ENCODE measurements at regions of chr1 and their contacts with region 1.

Region 1: DNA sequence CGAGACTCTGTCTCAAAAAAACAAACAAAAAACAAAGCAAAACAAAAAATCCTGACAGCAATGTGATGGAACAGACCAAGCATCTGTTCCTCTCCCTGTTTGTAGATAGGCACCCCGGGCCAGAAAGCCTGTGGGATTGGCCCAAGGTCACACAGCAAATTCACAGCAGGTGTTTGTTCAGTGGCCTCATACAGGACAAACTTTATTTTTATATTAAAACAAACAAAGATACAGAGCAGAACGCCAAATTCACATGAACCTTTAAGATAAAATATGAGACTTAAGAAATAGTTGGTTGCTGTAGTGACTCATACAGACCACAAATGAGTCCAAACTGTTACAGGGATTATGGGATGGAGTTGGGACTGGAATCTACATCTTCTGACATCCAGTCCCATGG is 2.3 kb upstream of the CELA2A start:
- DNase-seq: no peak
- H3K4me3 ChIP-seq: no peak overlapping the region
- H3K4me3 Mint-ChIP-seq: no peak overlapping the region
- H3K27ac ChIP-seq: no peak overlapping the region
- H3K27ac Mint-ChIP-seq: no peak overlapping the region
- H3K4me1 ChIP-seq: no peaks in the 10 kb centered on the region
- H3K4me1 Mint-ChIP-seq: peaks cover 9% of the 10 kb centered on the region
- H3K27me3 ChIP-seq: no peaks in the 10 kb centered on the region
- H3K27me3 Mint-ChIP-seq: peaks cover 2 to 4% (median 3%) of the 10 kb centered on the region in 3 donors
- CTCF ChIP-seq: no peak

Region 2: GRCh38 chr1:15352123-15352957 is 101.9 kb before region 1 on chr1:
- intact Hi-C with region 1: no loop called
- DNase-seq: peak; percentile 46 to 78 (median 62)
- H3K4me3 ChIP-seq: no peak overlapping the region
- H3K4me3 Mint-ChIP-seq: peak overlapping the region in 1 of 2 donors; percentile 74
- H3K27ac ChIP-seq: no peak overlapping the region
- H3K27ac Mint-ChIP-seq: peak overlapping the region in 2 of 7 donors; percentile 22 to 83
- H3K4me1 ChIP-seq: peaks cover 8 to 11% of the 10 kb centered on the region in 2 donors
- H3K4me1 Mint-ChIP-seq: peaks cover 16% of the 10 kb centered on the region
- H3K27me3 ChIP-seq: no peaks in the 10 kb centered on the region
- H3K27me3 Mint-ChIP-seq: peaks cover 2 to 9% (median 2%) of the 10 kb centered on the region in 3 donors
- CTCF ChIP-seq: no peak

Region 3: GRCh38 chr1:15399710-15400109 is 54.5 kb before region 1 on chr1:
- intact Hi-C with region 1: loop called in 1 of 2 experiments (anchors 5 kb)
- DNase-seq: no peak
- H3K4me3 ChIP-seq: no peak overlapping the region
- H3K4me3 Mint-ChIP-seq: no peak overlapping the region
- H3K27ac ChIP-seq: no peak overlapping the region
- H3K27ac Mint-ChIP-seq: no peak overlapping the region
- H3K4me1 ChIP-seq: no peaks in the 10 kb centered on the region
- H3K4me1 Mint-ChIP-seq: no peaks in the 10 kb centered on the region
- H3K27me3 ChIP-seq: no peaks in the 10 kb centered on the region
- H3K27me3 Mint-ChIP-seq: peaks cover 0 to 6% (median 1%) of the 10 kb centered on the region in 3 donors
- CTCF ChIP-seq: no peak

Region 4: GRCh38 chr1:15432324-15432723 is 21.9 kb before region 1 on chr1:
- intact Hi-C with region 1: no loop called
- DNase-seq: no peak
- H3K4me3 ChIP-seq: no peak overlapping the region
- H3K4me3 Mint-ChIP-seq: no peak overlapping the region
- H3K27ac ChIP-seq: peak overlapping the region in 1 of 2 donors; percentile 48
- H3K27ac Mint-ChIP-seq: peak overlapping the region; percentile 40 to 97 (median 76)
- H3K4me1 ChIP-seq: peaks cover 32 to 67% of the 10 kb centered on the region in 2 donors
- H3K4me1 Mint-ChIP-seq: peaks cover 54% of the 10 kb centered on the region
- H3K27me3 ChIP-seq: no peaks in the 10 kb centered on the region
- H3K27me3 Mint-ChIP-seq: peaks cover 0 to 1% (median 0%) of the 10 kb centered on the region in 3 donors
- CTCF ChIP-seq: no peak

Measured in CD14-positive monocyte (primary cell).